ENCODE measurements at regions of chr1 and their contacts with region 1.

Region 1: GRCh38 chr1:50368179-50369012 is 54.8 kb downstream of the DMRTA2 start:
- DNase-seq: peak; percentile 63 to 78 (median 73)
- ATAC-seq: peak; percentile 90
- H3K4me3 ChIP-seq: no peak overlapping the region
- H3K27ac ChIP-seq: no peak overlapping the region
- H3K4me1 ChIP-seq: peaks cover 0 to 3% of the 10 kb centered on the region in 2 experiments; a peak in 1 of 5 replicates
- H3K27me3 ChIP-seq: peaks cover 2 to 4% of the 10 kb centered on the region in 2 experiments; a peak in 3 of 5 replicates
- CTCF ChIP-seq: peak; percentile 81 to 84 (median 83)
- EP300 ChIP-seq: no peak
- POLR2A ChIP-seq: no peak
- RAD21 ChIP-seq: peak; percentile 75 to 89

Region 2: GRCh38 chr1:50123071-50123470 is 245.3 kb before region 1 on chr1:
- CTCF ChIA-PET with region 1: no interaction called
- POLR2A ChIA-PET with region 1: no interaction called
- in situ Hi-C with region 1: no loop called
- intact Hi-C with region 1: no loop called
- DNase-seq: no peak
- ATAC-seq: no peak
- H3K4me3 ChIP-seq: no peak overlapping the region
- H3K27ac ChIP-seq: no peak overlapping the region
- H3K4me1 ChIP-seq: no peaks in the 10 kb centered on the region
- H3K27me3 ChIP-seq: no peaks in the 10 kb centered on the region
- CTCF ChIP-seq: no peak
- EP300 ChIP-seq: no peak
- POLR2A ChIP-seq: no peak
- RAD21 ChIP-seq: no peak

Region 3: GRCh38 chr1:50605186-50605875 is 236.9 kb after region 1 on chr1:
- CTCF ChIA-PET with region 1: interaction called, 16 read pairs
- POLR2A ChIA-PET with region 1: no interaction called
- in situ Hi-C with region 1: no loop called
- intact Hi-C with region 1: loop called (anchors 1 kb)
- DNase-seq: peak; percentile 31 to 59 (median 40)
- ATAC-seq: peak; percentile 90
- H3K4me3 ChIP-seq: no peak overlapping the region
- H3K27ac ChIP-seq: no peak overlapping the region
- H3K4me1 ChIP-seq: no peaks in the 10 kb centered on the region
- H3K27me3 ChIP-seq: no peaks in the 10 kb centered on the region
- CTCF ChIP-seq: peak; percentile 49 to 74 (median 62); a peak in 5 of 6 replicates
- EP300 ChIP-seq: no peak
- POLR2A ChIP-seq: no peak
- RAD21 ChIP-seq: peak; percentile 47 to 71

Region 4: GRCh38 chr1:50735443-50735842 is 367.0 kb after region 1 on chr1:
- CTCF ChIA-PET with region 1: interaction called, 15 read pairs
- POLR2A ChIA-PET with region 1: no interaction called
- in situ Hi-C with region 1: no loop called
- intact Hi-C with region 1: loop called (anchors 1 kb)
- DNase-seq: peak; percentile 28 to 47 (median 42)
- ATAC-seq: no peak
- H3K4me3 ChIP-seq: no peak overlapping the region
- H3K27ac ChIP-seq: no peak overlapping the region
- H3K4me1 ChIP-seq: no peaks in the 10 kb centered on the region
- H3K27me3 ChIP-seq: no peaks in the 10 kb centered on the region
- CTCF ChIP-seq: peak in 2 of 3 experiments; percentile 35 to 60; a peak in 4 of 6 replicates
- EP300 ChIP-seq: no peak
- POLR2A ChIP-seq: no peak
- RAD21 ChIP-seq: peak in 1 of 2 experiments; percentile 57; a peak in 3 of 4 replicates

Region 5: DNA sequence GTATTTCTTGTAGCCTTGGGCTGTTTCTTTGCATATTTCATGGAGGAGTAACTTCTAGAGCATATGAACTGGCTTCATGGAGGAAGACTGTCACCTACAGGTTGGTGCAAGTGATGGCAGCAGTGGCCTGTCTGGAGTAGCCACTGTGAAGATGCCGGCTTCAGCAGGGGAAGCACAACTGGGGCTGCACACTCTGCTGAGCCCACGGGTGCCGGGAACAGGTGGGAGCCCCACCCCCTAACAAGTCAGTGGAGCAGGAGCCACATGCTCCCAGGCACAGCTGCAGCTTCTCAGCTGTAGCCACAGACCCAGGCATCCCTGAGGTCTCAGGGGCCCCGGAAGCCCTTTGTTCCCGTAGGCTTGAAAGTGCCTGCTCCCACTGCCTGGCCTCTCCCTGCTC is 690.5 kb after region 1 on chr1:
- CTCF ChIA-PET with region 1: no interaction called
- POLR2A ChIA-PET with region 1: no interaction called
- in situ Hi-C with region 1: loop called (anchors 25 kb)
- intact Hi-C with region 1: loop called (anchors 5 kb)
- DNase-seq: peak in 3 of 4 experiments; percentile 12 to 50 (median 17)
- ATAC-seq: peak; percentile 96
- H3K4me3 ChIP-seq: no peak overlapping the region
- H3K27ac ChIP-seq: no peak overlapping the region
- H3K4me1 ChIP-seq: peaks cover 0 to 5% of the 10 kb centered on the region in 2 experiments; a peak in 1 of 5 replicates
- H3K27me3 ChIP-seq: no peaks in the 10 kb centered on the region
- CTCF ChIP-seq: peak; percentile 48 to 73 (median 49); a peak in 5 of 6 replicates
- EP300 ChIP-seq: no peak
- POLR2A ChIP-seq: no peak
- RAD21 ChIP-seq: peak in 1 of 2 experiments; percentile 64; a peak in 2 of 4 replicates

Region 6: GRCh38 chr1:51284487-51284954 is 916.1 kb after region 1 on chr1:
- CTCF ChIA-PET with region 1: no interaction called
- POLR2A ChIA-PET with region 1: no interaction called
- in situ Hi-C with region 1: no loop called
- intact Hi-C with region 1: loop called (anchors 10 kb)
- DNase-seq: peak; percentile 92 to 99 (median 94)
- ATAC-seq: peak; percentile 93
- H3K4me3 ChIP-seq: no peak overlapping the region
- H3K27ac ChIP-seq: no peak overlapping the region
- H3K4me1 ChIP-seq: peaks cover 23 to 30% of the 10 kb centered on the region in 2 experiments; a peak in 4 of 5 replicates
- H3K27me3 ChIP-seq: no peaks in the 10 kb centered on the region
- CTCF ChIP-seq: peak in 1 of 3 experiments; percentile 11; a peak in 1 of 6 replicates
- EP300 ChIP-seq: peak; percentile 98
- POLR2A ChIP-seq: no peak
- RAD21 ChIP-seq: peak in 1 of 2 experiments; percentile 28; a peak in 2 of 4 replicates